Heart left ventricle (tissue), 16 donors: ENCODE measurements at regions of chr12 and their contacts with region 1.

Region 1: DNA sequence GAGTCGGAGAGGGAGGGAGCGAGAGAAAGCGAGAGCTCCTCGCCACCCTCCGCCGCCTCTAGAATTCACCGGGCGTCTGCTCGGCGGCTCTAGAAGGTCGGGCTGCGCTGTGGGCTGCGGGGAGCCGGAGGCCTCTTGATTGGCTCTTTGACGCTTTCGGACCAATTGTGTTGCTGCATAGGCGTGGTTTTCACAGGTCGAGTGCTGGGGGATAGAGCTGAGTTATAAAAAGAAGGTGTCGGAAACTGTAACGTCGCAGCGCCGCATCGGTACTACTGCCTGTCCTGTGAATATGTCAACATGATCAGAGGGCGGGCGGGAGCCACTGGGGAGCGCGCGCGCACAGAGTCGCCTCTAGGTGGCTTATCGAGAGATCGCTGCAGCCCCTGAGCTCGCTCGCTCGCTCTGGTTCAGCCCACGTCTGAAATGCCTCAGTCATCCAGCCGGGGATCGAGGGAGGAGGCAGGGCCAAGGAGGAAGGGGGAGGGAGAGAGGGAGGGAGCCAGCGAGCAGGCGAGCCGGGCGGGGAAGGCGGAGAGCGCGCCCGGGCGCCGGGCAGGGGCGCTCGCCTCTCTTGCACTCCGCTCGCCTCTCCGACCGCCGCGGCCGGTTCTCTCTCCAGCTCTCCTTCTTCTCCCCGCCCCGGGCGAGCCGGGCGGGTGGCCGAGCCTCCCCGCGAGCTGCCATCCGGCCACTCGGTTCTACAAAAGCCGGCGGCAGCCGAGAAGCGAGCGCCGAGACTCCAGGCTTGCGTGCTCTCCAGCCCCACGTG is at the start of gene TBX3:
- DNase-seq: peak; percentile 91 to 96 (median 94)
- ATAC-seq: peak; percentile 93 to 95 (median 94)
- H3K4me3 ChIP-seq: peak within 1 kb of the TSS; percentile 56 to 89 (median 74)
- H3K27ac ChIP-seq: peak within 1 kb of the TSS; percentile 81 to 98 (median 90)
- H3K4me1 ChIP-seq: peaks cover 0 to 21% (median 10%) of the 10 kb centered on the region in 12 donors
- H3K27me3 ChIP-seq: peaks cover 11 to 74% (median 40%) of the 10 kb centered on the region in 9 donors
- CTCF ChIP-seq: peak; percentile 15 to 70 (median 51)
- POLR2A ChIP-seq: peak; percentile 55 to 98
- total RNA-seq, gene TBX3: 10.3 to 31.3 (median 16.2) TPM

Region 2: DNA sequence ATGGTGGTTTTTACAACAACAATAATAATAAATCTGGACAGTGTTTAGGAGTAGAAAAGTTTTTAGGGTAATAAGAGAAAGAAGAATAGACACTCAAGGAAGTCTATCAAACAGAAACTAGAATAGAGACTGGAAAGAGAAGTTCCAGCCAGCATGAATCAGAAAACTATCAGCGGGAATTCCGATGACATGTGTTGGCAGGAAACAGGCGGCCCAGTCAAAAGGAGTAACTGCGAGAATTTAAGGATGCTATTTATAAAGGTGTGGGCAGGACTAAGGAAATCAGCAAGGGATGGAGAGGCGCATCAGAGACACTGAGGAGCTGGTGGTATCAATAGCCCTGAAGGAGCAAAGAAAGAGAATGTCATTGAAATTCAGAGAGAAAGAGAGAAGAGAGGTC is 368.2 kb before region 1 on chr12:
- intact Hi-C with region 1: no loop called
- DNase-seq: peak in 2 of 5 donors; percentile 28 to 50
- ATAC-seq: peak in 3 of 4 donors; percentile 44 to 77 (median 49)
- H3K4me3 ChIP-seq: no peak overlapping the region
- H3K27ac ChIP-seq: no peak overlapping the region
- H3K4me1 ChIP-seq: peaks cover 0 to 12% (median 2%) of the 10 kb centered on the region in 12 donors
- H3K27me3 ChIP-seq: no peaks in the 10 kb centered on the region
- CTCF ChIP-seq: no peak
- POLR2A ChIP-seq: no peak

Region 3: GRCh38 chr12:114799574-114800487 is 115.5 kb after region 1 on chr12:
- intact Hi-C with region 1: loop called in 2 of 10 experiments (anchors 5 to 10 kb)
- DNase-seq: peak; percentile 70 to 92 (median 81)
- ATAC-seq: peak; percentile 98 to 99 (median 99)
- H3K4me3 ChIP-seq: no peak overlapping the region
- H3K27ac ChIP-seq: peak overlapping the region in 5 of 12 donors; percentile 2 to 26 (median 17)
- H3K4me1 ChIP-seq: peaks cover 0 to 13% (median 0%) of the 10 kb centered on the region in 12 donors
- H3K27me3 ChIP-seq: no peaks in the 10 kb centered on the region
- CTCF ChIP-seq: no peak
- POLR2A ChIP-seq: no peak

Region 4: DNA sequence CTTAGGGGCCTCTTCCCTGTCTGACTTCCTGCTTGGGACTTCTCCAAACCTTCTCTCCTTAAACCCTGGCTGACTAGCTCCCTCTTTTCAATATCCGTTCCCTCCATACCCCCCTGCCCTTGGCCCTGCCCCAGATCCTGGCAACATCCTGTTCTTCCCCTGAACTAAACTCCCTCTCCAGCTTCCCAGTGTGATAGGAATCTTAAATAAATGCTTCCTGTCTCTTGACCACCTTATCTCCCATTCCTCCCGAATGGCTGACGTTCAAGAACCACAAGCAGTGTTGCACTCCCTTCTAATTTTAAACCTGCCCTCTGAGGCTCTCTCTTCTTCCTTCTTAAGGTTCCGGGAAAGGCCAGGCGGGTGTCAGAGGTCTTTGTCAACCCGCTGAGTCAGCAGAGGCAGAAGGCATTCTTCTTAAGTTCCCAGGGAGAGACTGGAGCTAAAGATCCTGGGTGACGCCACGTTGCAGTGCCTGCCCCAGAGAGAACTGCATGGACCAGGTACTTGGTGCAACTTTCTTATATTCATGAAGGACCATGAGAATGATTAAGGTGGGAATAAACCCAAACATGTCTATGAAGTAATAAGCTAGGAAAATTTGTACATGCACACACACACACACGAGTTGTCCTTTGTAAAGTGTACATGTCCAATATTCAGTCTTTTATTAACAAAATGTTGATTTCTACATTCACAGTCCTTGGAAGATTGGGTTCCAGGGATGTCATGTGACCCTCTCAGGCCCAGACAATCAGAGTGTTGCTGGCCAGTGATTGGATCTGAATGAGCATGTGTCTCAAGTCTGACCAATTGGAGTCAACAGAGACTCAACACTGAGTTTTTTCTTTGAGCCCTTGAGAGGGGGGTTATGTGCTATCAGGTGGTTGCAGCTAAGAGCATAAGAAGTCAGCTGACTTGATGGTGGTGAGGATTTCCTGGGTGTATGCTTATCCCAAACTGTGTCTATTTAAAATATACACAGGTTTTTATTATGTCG is 419.9 kb after region 1 on chr12:
- intact Hi-C with region 1: loop called in 1 of 10 experiments (anchors 5 kb)
- DNase-seq: peak; percentile 30 to 72 (median 53)
- ATAC-seq: peak in 3 of 4 donors; percentile 48 to 83 (median 68)
- H3K4me3 ChIP-seq: no peak overlapping the region
- H3K27ac ChIP-seq: peak overlapping the region in 6 of 12 donors; percentile 18 to 64 (median 50)
- H3K4me1 ChIP-seq: peaks cover 0 to 23% (median 2%) of the 10 kb centered on the region in 12 donors
- H3K27me3 ChIP-seq: no peaks in the 10 kb centered on the region
- CTCF ChIP-seq: no peak
- POLR2A ChIP-seq: no peak

Region 5: GRCh38 chr12:115337693-115338543 is 653.6 kb after region 1 on chr12:
- intact Hi-C with region 1: loop called in 1 of 10 experiments (anchors 10 kb)
- DNase-seq: peak in 4 of 5 donors; percentile 44 to 72 (median 57)
- ATAC-seq: peak; percentile 86 to 93 (median 92)
- H3K4me3 ChIP-seq: no peak overlapping the region
- H3K27ac ChIP-seq: peak overlapping the region in 11 of 12 donors; percentile 29 to 72 (median 56)
- H3K4me1 ChIP-seq: peaks cover 0 to 33% (median 3%) of the 10 kb centered on the region in 12 donors
- H3K27me3 ChIP-seq: no peaks in the 10 kb centered on the region
- CTCF ChIP-seq: no peak
- POLR2A ChIP-seq: peak in 1 of 2 donors; percentile 16

Region 6: GRCh38 chr12:115491511-115492250 is 807.4 kb after region 1 on chr12:
- intact Hi-C with region 1: loop called in 1 of 10 experiments (anchors 10 kb)
- DNase-seq: no peak
- ATAC-seq: no peak
- H3K4me3 ChIP-seq: no peak overlapping the region
- H3K27ac ChIP-seq: no peak overlapping the region
- H3K4me1 ChIP-seq: peaks cover 0 to 11% (median 0%) of the 10 kb centered on the region in 12 donors
- H3K27me3 ChIP-seq: no peaks in the 10 kb centered on the region
- CTCF ChIP-seq: no peak
- POLR2A ChIP-seq: no peak

Region 7: DNA sequence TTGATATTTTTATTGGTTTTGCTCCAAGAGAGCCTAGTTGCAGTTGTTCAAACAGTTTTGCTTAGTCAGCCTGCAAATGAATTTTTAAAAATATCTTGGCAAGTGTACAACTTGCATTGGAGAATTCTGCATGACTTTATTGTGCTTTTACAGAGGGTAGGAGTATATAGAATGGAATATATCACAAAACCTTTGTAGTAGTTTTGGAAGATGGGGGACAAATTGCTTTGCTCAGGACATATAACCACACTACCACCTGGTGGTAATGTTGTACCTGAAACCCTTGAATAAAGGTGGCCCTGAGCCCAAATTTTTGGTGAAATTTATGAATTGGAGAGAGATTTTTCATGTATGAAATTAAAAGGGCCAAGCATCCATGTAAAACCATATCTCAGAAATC is 948.0 kb after region 1 on chr12:
- intact Hi-C with region 1: loop called in 1 of 10 experiments (anchors 5 kb)
- DNase-seq: no peak
- ATAC-seq: no peak
- H3K4me3 ChIP-seq: no peak overlapping the region
- H3K27ac ChIP-seq: no peak overlapping the region
- H3K4me1 ChIP-seq: no peaks in the 10 kb centered on the region
- H3K27me3 ChIP-seq: no peaks in the 10 kb centered on the region
- CTCF ChIP-seq: peak in 11 of 12 donors; percentile 12 to 56 (median 36)
- POLR2A ChIP-seq: no peak